B cell (primary cell): ENCODE measurements at regions of chr19 and their contacts with region 1.

Region 1: GRCh38 chr19:55117636-55118391 is at the start of gene PPP1R12C:
- DNase-seq: peak; percentile 95
- ATAC-seq: peak; percentile 95
- H3K4me3 ChIP-seq: peak within 1 kb of the TSS; percentile 75 to 98 (median 81)
- H3K4me3 Mint-ChIP-seq: peak within 1 kb of the TSS; percentile 98
- H3K27ac ChIP-seq: peak within 1 kb of the TSS; percentile 31 to 77
- H3K27ac Mint-ChIP-seq: peak within 1 kb of the TSS; percentile 97
- H3K4me1 ChIP-seq: peaks cover 12 to 42% of the 10 kb centered on the region in 2 donors
- H3K4me1 Mint-ChIP-seq: peaks cover 50% of the 10 kb centered on the region
- H3K27me3 ChIP-seq: no peaks in the 10 kb centered on the region
- H3K27me3 Mint-ChIP-seq: peaks cover 3% of the 10 kb centered on the region
- CTCF ChIP-seq: no peak
- total RNA-seq, gene PPP1R12C: 174 and 179 TPM in 2 replicates

Region 2: DNA sequence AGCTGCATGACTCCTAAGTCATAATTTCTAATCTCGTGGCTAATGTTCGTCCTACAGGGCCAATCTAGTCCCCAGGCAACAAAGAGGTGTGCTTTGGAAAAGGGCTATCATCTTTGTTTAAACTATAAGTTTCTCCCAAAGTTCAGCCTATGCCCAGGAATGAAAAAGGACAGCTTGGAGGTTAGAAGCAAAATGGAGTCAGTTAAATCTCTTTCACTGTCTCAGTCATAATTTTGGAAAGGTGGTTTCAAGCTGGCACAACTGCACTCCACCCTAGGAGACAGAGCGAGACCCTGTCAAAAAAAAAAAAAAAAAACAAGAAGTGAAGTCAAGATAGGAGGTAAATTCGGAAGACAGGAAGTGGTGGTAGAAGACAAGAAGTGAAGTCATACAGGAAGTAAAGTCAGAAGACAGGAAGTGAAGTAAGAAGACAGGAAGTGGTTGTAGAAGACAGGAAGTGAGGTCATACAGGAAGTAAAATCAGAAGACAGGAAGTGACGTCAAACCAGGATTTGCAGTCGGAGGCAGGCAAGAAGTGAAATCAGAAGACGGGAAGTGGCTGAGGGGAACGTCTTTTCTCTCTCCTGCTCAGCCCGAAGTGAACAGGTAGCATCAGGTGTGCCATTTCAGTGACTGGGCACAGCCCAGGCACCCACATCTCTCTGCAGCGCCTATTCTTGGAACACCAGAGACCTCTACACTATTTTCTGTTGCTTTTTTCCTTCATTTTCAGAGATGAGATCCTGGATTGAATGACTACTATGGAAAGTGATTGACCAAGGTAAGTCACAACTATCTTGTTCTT is 111.9 kb before region 1 on chr19:
- CTCF ChIA-PET with region 1: no interaction called
- POLR2A ChIA-PET with region 1: no interaction called
- intact Hi-C with region 1: loop called (anchors 10 kb)
- DNase-seq: peak; percentile 90
- ATAC-seq: peak; percentile 77
- H3K4me3 ChIP-seq: peak overlapping the region in 4 of 5 experiments; percentile 19 to 76 (median 54)
- H3K4me3 Mint-ChIP-seq: peak overlapping the region; percentile 76
- H3K27ac ChIP-seq: peak overlapping the region; percentile 59 to 82
- H3K27ac Mint-ChIP-seq: peak overlapping the region; percentile 90
- H3K4me1 ChIP-seq: peaks cover 10 to 15% of the 10 kb centered on the region in 2 donors
- H3K4me1 Mint-ChIP-seq: peaks cover 15% of the 10 kb centered on the region
- H3K27me3 ChIP-seq: peaks cover 0 to 24% (median 4%) of the 10 kb centered on the region in 4 experiments
- H3K27me3 Mint-ChIP-seq: peaks cover 22% of the 10 kb centered on the region
- CTCF ChIP-seq: no peak

Region 3: GRCh38 chr19:55088543-55089341 is 29.1 kb before region 1 on chr19:
- CTCF ChIA-PET with region 1: interaction called, 14 read pairs
- POLR2A ChIA-PET with region 1: interaction called, 3 read pairs
- intact Hi-C with region 1: no loop called
- DNase-seq: peak; percentile 78
- ATAC-seq: peak; percentile 53
- H3K4me3 ChIP-seq: no peak overlapping the region
- H3K4me3 Mint-ChIP-seq: peak overlapping the region; percentile 80
- H3K27ac ChIP-seq: no peak overlapping the region
- H3K27ac Mint-ChIP-seq: peak overlapping the region; percentile 42
- H3K4me1 ChIP-seq: peaks cover 19 to 20% of the 10 kb centered on the region in 2 donors
- H3K4me1 Mint-ChIP-seq: peaks cover 28% of the 10 kb centered on the region
- H3K27me3 ChIP-seq: peaks cover 0 to 46% (median 15%) of the 10 kb centered on the region in 4 experiments
- H3K27me3 Mint-ChIP-seq: peaks cover 40% of the 10 kb centered on the region
- CTCF ChIP-seq: peak; percentile 81

Region 4: DNA sequence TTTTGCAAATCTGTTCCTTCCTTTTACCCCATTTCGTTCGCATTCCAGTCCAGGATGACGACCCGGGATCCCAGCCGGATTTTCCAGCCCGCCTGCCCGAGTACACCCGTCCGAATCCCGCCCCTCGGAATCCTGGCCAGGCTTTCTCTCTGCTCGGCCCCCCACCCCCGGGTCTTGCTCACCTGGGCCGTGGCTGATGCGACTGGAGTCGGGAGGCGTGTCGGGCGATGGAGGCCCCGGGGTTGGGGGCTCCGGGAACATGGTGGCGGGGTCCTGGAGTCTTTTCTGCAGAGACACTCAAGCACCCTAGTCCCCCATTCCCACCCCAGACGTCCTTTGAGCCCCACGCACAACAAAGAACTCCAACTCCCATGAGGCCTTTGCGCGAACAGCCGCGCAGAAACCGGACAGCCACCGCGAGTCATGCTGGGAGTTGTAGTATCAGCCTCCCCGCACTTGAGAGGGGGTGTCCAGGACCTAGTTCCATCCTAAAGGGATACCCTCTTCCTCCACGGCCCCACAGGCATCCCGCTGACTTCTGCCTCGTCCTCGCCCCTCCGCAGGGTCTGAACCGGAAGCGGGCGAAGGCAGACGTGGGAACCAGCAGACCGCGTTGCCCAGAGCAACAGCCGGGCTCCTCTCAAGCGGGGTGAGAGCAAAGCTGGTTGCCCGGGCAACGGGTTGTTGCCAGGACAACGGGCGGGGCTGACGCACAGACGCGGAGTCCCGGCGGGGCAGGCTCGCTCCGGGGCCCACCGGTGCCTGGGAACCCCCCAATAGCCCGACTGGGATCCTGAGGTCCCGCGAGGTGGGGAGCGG is 61.2 kb after region 1 on chr19:
- CTCF ChIA-PET with region 1: no interaction called
- POLR2A ChIA-PET with region 1: no interaction called
- intact Hi-C with region 1: loop called (anchors 1 kb)
- DNase-seq: peak; percentile 98
- ATAC-seq: peak; percentile 83
- H3K4me3 ChIP-seq: peak overlapping the region in 4 of 5 experiments; percentile 31 to 60 (median 50)
- H3K4me3 Mint-ChIP-seq: peak overlapping the region; percentile 88
- H3K27ac ChIP-seq: peak overlapping the region in 1 of 2 donors; percentile 64
- H3K27ac Mint-ChIP-seq: peak overlapping the region; percentile 89
- H3K4me1 ChIP-seq: peaks cover 29 to 40% of the 10 kb centered on the region in 2 donors
- H3K4me1 Mint-ChIP-seq: peaks cover 29% of the 10 kb centered on the region
- H3K27me3 ChIP-seq: peaks cover 0 to 91% (median 56%) of the 10 kb centered on the region in 4 experiments
- H3K27me3 Mint-ChIP-seq: peaks cover 62% of the 10 kb centered on the region
- CTCF ChIP-seq: no peak

Region 5: GRCh38 chr19:55674841-55675660 is 557.2 kb after region 1 on chr19 and contains the start of gene EPN1:
- CTCF ChIA-PET with region 1: no interaction called
- POLR2A ChIA-PET with region 1: no interaction called
- intact Hi-C with region 1: loop called (anchors 5 kb)
- DNase-seq: peak; percentile 98
- ATAC-seq: peak; percentile 63
- H3K4me3 ChIP-seq: peak within 1 kb of the TSS; percentile 64 to 93 (median 77)
- H3K4me3 Mint-ChIP-seq: peak within 1 kb of the TSS; percentile 95
- H3K27ac ChIP-seq: peak within 1 kb of the TSS; percentile 87 to 93
- H3K27ac Mint-ChIP-seq: peak within 1 kb of the TSS; percentile 91
- H3K4me1 ChIP-seq: peaks cover 44 to 59% of the 10 kb centered on the region in 2 donors
- H3K4me1 Mint-ChIP-seq: peaks cover 70% of the 10 kb centered on the region
- H3K27me3 ChIP-seq: no peaks in the 10 kb centered on the region
- H3K27me3 Mint-ChIP-seq: no peaks in the 10 kb centered on the region
- CTCF ChIP-seq: no peak
- total RNA-seq, gene EPN1: 63.8 and 63.9 TPM in 2 replicates